ENCODE measurements at regions of chr2 and their contacts with region 1.

Region 1: DNA sequence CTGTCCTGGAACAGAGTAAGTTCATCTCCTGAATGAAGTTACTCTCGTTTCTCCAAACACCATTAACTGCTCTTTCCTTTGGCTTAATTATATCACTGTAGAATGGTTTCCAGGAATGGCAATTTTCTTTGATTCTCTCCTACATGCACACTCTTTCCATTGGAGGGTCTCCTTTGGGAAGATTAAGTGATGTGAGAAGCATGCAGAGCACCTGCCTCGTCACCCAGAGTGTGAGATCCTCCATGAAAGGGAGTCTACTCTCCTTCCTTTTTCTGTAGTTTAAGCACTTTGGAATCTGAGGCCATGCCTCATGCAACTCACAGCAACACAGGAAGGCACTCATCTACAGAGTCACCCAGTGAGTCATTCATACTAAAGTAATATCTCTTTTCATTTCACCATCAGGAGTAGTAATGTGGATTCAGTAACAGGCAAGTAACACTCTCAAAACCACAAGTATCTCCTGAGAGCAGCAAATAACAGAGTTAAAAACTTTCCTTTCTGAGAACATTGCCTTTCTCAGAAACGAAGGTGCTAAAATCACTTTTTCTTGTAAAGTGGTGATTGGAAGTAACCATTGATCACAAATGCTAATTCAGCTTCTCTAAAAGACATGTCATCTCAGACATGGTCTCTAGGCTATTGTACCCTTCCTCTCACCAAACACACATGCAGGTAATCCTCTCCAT is 52.8 kb upstream of the IL1RL1 start:
- DNase-seq: peak; percentile 26
- H3K4me3 Mint-ChIP-seq: peak overlapping the region; percentile 40
- H3K27ac Mint-ChIP-seq: peak overlapping the region; percentile 98
- H3K4me1 Mint-ChIP-seq: peaks cover 47% of the 10 kb centered on the region
- H3K27me3 Mint-ChIP-seq: no peaks in the 10 kb centered on the region

Region 2: GRCh38 chr2:101717071-101717845 is 541.3 kb before region 1 on chr2:
- intact Hi-C with region 1: loop called (anchors 2 kb)
- DNase-seq: no peak
- H3K4me3 Mint-ChIP-seq: peak overlapping the region; percentile 38
- H3K27ac Mint-ChIP-seq: peak overlapping the region; percentile 83
- H3K4me1 Mint-ChIP-seq: peaks cover 60% of the 10 kb centered on the region
- H3K27me3 Mint-ChIP-seq: no peaks in the 10 kb centered on the region

Region 3: GRCh38 chr2:102294802-102295489 is 36.4 kb after region 1 on chr2:
- intact Hi-C with region 1: loop called (anchors 1 kb)
- DNase-seq: no peak
- H3K4me3 Mint-ChIP-seq: no peak overlapping the region
- H3K27ac Mint-ChIP-seq: peak overlapping the region; percentile 81
- H3K4me1 Mint-ChIP-seq: peaks cover 70% of the 10 kb centered on the region
- H3K27me3 Mint-ChIP-seq: no peaks in the 10 kb centered on the region

Region 4: GRCh38 chr2:102301867-102302362 is 43.4 kb after region 1 on chr2:
- intact Hi-C with region 1: loop called (anchors 1 kb)
- DNase-seq: peak; percentile 55
- H3K4me3 Mint-ChIP-seq: peak overlapping the region; percentile 59
- H3K27ac Mint-ChIP-seq: peak overlapping the region; percentile 96
- H3K4me1 Mint-ChIP-seq: peaks cover 76% of the 10 kb centered on the region
- H3K27me3 Mint-ChIP-seq: no peaks in the 10 kb centered on the region

Region 5: GRCh38 chr2:102336502-102336945 is 78.0 kb after region 1 on chr2:
- intact Hi-C with region 1: loop called (anchors 1 kb)
- DNase-seq: no peak
- H3K4me3 Mint-ChIP-seq: no peak overlapping the region
- H3K27ac Mint-ChIP-seq: peak overlapping the region; percentile 10
- H3K4me1 Mint-ChIP-seq: peaks cover 49% of the 10 kb centered on the region
- H3K27me3 Mint-ChIP-seq: no peaks in the 10 kb centered on the region

Region 6: DNA sequence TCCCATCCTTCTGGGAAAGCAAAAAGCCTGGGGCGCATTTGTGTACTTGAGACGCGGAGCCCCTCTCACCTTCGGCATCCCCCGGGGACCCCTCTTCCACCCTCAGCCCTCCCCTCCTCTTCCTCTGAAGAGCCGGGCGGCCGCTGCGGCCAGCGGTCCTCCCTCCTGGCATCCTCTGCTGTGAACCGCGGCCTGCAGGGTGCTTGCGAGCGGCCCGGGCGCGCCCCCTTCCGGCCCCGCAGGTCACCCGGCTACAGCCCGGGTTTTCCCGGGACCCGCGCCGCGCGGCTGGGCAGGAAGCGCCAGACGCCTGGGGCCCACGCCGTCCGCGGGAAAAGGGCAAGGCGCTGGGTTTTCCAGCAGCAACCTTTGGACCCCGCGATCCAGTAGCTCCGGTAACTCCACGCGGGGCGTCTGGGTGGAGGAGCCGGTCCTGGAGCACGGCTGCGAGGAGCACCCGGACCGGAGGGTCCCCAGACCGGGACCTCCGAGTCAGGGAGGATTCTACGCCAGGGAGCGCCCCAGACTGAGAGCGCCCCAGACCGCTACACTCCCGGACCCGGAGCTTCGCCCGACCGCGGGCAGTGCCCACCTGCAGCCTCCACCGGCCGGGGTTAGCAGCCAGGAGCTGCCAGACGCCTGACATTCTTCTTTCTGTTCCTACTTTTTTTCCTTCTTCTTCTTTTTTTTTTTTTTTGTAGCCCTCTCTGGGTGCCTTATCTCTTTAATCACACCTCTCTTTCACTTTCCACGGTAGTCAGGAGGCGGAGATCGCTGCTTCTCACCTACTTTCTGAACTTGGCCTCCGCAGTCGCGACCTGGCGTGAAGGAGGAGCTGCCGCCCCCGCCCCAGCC is 97.2 kb after region 1 on chr2 and contains the start of gene IL18R1:
- intact Hi-C with region 1: loop called (anchors 1 kb)
- DNase-seq: peak; percentile 68
- H3K4me3 Mint-ChIP-seq: peak within 1 kb of the TSS; percentile 98
- H3K27ac Mint-ChIP-seq: peak within 1 kb of the TSS; percentile 93
- H3K4me1 Mint-ChIP-seq: peaks cover 45% of the 10 kb centered on the region
- H3K27me3 Mint-ChIP-seq: no peaks in the 10 kb centered on the region
- total RNA-seq, gene IL18R1: 61.9 and 68.2 TPM in 2 replicates

Region 7: DNA sequence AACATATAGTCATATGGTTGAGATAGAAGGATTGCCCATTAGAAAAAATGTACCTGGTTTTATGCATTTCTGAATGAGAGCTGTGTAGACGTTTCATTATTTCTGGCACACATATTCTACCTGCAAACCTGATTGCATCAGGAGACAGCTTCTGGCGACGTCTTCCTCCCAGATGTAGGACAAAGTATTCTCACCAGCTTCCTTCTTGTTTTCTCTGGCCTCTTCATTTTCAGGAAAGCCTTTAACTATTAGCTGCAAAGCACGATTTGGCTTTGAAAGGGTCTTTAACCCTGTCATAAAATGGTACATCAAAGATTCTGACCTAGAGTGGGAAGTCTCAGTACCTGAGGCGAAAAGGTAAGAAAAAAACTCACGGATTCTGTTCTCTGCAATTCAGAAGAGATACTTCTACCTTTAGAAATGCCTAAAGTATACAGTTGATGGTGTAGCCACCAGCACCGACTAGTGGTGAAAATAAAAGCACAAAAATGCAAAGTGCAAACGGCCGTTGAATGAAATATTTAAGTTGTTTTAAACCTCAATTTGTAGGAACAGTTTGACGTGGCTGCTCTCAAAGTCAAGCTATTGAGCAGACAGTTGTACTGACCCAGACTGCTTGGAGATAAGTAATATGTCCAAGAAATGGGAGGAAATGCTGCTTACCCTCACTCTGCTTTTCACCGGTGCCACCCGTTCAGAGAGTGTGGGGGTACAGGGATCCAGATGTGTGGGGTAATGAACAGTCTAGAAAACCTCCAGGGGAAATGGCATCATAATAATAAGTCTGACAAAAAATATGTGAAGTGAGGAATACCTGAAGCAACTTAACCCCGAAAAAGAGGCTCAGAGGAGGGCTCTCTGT is 184.7 kb after region 1 on chr2:
- intact Hi-C with region 1: loop called (anchors 2 kb)
- DNase-seq: peak; percentile 21
- H3K4me3 Mint-ChIP-seq: peak overlapping the region; percentile 33
- H3K27ac Mint-ChIP-seq: peak overlapping the region; percentile 47
- H3K4me1 Mint-ChIP-seq: peaks cover 13% of the 10 kb centered on the region
- H3K27me3 Mint-ChIP-seq: no peaks in the 10 kb centered on the region